ENCODE measurements at regions of chr4 and their contacts with region 1.

Region 1: GRCh38 chr4:47933840-47934239 is 19.5 kb upstream of the NFXL1 start:
- DNase-seq: no peak
- ATAC-seq: peak; percentile 64
- H3K4me3 Mint-ChIP-seq: no peak overlapping the region
- H3K27ac Mint-ChIP-seq: no peak overlapping the region
- H3K4me1 Mint-ChIP-seq: peaks cover 8% of the 10 kb centered on the region
- H3K27me3 Mint-ChIP-seq: peaks cover 3% of the 10 kb centered on the region
- CTCF ChIP-seq: no peak

Region 2: DNA sequence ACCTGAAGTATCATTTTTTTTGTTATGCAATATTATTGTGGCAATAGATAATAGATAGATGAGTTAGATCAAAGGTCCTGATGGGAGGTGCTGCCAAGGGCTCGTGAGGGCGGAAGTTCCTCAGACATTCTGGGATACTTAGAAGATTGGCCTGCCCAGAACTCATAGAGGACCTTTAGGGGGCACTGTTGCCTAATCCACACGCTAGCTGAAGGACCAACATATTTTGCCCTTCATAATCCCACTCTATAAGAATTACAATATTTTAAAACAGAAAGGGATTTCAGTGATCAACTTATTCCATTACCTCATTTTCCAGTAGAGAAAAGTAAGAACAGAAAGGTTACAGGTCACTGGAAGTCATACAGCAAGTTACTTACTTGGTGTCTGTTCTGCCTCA is 1001.9 kb before region 1 on chr4:
- CTCF ChIA-PET with region 1: no interaction called
- POLR2A ChIA-PET with region 1: no interaction called
- intact Hi-C with region 1: loop called (anchors 10 kb)
- DNase-seq: no peak
- ATAC-seq: no peak
- H3K4me3 Mint-ChIP-seq: no peak overlapping the region
- H3K27ac Mint-ChIP-seq: no peak overlapping the region
- H3K4me1 Mint-ChIP-seq: no peaks in the 10 kb centered on the region
- H3K27me3 Mint-ChIP-seq: no peaks in the 10 kb centered on the region
- CTCF ChIP-seq: no peak

Region 3: DNA sequence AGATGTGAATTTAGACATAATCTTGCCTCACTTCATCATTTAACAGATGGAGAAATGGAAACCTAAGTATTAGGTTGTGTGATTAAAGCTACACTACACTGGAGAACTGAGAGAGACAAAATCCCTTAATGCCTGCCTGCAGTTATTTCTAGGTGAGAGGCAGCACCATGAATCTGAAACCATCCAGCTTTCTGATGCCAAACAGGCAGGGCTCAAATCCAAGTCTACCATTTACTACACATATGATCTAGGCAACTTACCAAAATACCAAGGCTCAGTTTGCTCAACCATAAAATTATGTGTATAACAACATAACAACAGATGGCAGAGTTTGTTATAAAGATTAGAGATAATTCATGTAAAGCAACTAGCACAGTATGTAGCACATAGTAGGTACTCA is 979.2 kb before region 1 on chr4:
- CTCF ChIA-PET with region 1: no interaction called
- POLR2A ChIA-PET with region 1: no interaction called
- intact Hi-C with region 1: no loop called
- DNase-seq: no peak
- ATAC-seq: no peak
- H3K4me3 Mint-ChIP-seq: no peak overlapping the region
- H3K27ac Mint-ChIP-seq: no peak overlapping the region
- H3K4me1 Mint-ChIP-seq: no peaks in the 10 kb centered on the region
- H3K27me3 Mint-ChIP-seq: peaks cover 3% of the 10 kb centered on the region
- CTCF ChIP-seq: no peak

Region 4: DNA sequence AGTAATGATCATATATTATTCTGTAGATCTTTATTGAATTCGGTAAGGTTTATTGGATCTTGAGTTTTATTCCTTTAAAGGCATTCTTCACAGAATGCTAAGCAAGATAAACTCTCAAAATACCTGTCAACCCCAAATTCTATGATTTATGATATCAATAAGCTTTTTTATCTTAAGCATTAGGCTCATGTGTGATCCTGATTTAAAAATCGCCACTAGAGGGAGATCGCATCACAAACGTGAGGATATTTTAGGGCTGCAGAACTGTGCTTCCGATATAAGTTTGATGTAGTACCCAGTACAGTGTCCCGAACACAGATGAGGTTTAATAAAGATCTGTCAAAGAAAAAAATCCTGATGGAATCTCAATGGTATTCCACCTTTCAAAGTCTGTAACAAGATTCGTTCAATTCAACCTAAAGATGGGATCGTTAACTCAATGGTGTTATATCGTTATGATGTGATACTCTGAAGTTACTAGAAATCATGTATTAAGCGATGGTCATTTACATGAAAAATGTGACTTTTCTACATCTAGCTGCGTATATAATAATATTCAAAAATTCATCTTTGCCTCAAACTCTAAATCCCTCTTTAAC is 264.9 kb before region 1 on chr4:
- CTCF ChIA-PET with region 1: interaction called, 26 read pairs
- POLR2A ChIA-PET with region 1: no interaction called
- intact Hi-C with region 1: loop called (anchors 1 kb)
- DNase-seq: no peak
- ATAC-seq: peak; percentile 54
- H3K4me3 Mint-ChIP-seq: no peak overlapping the region
- H3K27ac Mint-ChIP-seq: no peak overlapping the region
- H3K4me1 Mint-ChIP-seq: no peaks in the 10 kb centered on the region
- H3K27me3 Mint-ChIP-seq: peaks cover 7% of the 10 kb centered on the region
- CTCF ChIP-seq: peak; percentile 32

Region 5: GRCh38 chr4:47686294-47686872 is 247.5 kb before region 1 on chr4:
- CTCF ChIA-PET with region 1: interaction called, 33 read pairs
- POLR2A ChIA-PET with region 1: no interaction called
- intact Hi-C with region 1: loop called (anchors 1 kb)
- DNase-seq: peak; percentile 19
- ATAC-seq: peak; percentile 37
- H3K4me3 Mint-ChIP-seq: no peak overlapping the region
- H3K27ac Mint-ChIP-seq: no peak overlapping the region
- H3K4me1 Mint-ChIP-seq: no peaks in the 10 kb centered on the region
- H3K27me3 Mint-ChIP-seq: peaks cover 2% of the 10 kb centered on the region
- CTCF ChIP-seq: no peak

Region 6: DNA sequence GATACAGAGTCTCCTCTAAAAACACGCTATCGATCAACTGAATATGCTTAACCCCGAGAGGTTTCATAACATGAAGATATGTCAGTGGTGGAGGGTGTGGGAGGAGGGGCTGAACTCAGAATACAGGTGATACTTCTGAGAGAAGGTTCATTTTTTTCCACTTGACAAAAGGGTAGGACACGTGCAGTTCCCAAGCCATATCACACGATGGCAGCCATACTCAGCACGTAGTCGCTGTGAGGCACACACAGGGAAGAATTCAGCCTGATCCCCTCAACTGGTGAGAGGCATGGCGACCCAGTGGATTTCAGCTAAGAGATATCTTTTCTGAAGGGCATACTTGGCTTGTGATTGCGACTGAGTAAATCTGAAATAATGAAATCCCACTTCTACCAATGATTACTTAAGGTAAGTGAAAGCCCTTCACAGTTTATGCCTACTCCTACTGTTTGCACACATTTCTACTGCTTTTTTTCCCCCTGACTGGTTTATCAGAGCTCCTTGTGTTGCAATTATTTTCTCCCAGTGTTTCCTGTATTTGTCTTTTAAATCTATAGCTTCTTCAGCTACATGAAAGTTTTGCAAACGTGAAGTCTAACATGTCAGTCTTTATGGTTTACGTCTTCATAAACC is 229.0 kb before region 1 on chr4:
- CTCF ChIA-PET with region 1: no interaction called
- POLR2A ChIA-PET with region 1: no interaction called
- intact Hi-C with region 1: loop called (anchors 5 kb)
- DNase-seq: no peak
- ATAC-seq: no peak
- H3K4me3 Mint-ChIP-seq: no peak overlapping the region
- H3K27ac Mint-ChIP-seq: no peak overlapping the region
- H3K4me1 Mint-ChIP-seq: no peaks in the 10 kb centered on the region
- H3K27me3 Mint-ChIP-seq: peaks cover 26% of the 10 kb centered on the region
- CTCF ChIP-seq: no peak